ENCODE measurements at regions of chr16 and their contacts with region 1.

Region 1: GRCh38 chr16:3099732-3100499 is 822 bp upstream of the ZSCAN10 start:
- DNase-seq: peak; percentile 98
- CTCF ChIP-seq: no peak

Region 2: GRCh38 chr16:3051494-3051893 is 48.4 kb before region 1 on chr16:
- CTCF ChIA-PET with region 1: no interaction called
- POLR2A ChIA-PET with region 1: no interaction called
- DNase-seq: no peak
- CTCF ChIP-seq: no peak

Region 3: DNA sequence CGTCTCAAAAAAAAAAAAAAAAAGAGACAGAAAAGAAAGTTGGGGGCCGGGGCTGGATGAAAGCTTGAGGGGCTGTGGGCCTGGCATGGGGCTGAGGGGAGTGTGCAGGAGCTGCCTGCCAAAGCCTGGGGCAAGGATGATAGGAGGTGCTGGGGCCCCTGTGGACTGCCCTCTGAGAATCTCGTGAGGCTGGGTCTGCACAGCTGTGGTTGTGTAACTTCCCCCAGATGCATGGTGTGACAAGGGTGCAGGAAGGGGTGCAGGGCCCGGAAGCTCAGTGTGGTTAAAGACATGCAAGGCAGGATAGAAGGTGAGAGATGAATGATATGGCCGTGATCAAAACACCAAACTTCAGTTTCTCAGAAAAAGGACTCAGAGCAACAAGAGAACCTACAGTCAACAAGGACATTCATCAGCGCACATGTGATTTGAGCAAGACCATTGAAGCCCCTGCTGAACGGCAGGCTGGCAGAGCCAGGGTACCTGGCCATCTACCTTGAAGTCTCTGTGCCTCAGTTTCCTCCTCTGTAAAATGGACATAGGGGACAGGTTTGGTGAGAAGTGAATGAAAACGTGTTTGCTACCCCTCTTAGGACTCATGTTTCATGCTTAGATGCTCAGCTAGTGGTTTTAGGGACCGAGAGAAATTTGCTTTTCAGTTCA is 24.9 kb before region 1 on chr16:
- CTCF ChIA-PET with region 1: interaction called, 34 read pairs
- POLR2A ChIA-PET with region 1: interaction called, 4 read pairs
- DNase-seq: peak; percentile 65
- CTCF ChIP-seq: no peak

Region 4: DNA sequence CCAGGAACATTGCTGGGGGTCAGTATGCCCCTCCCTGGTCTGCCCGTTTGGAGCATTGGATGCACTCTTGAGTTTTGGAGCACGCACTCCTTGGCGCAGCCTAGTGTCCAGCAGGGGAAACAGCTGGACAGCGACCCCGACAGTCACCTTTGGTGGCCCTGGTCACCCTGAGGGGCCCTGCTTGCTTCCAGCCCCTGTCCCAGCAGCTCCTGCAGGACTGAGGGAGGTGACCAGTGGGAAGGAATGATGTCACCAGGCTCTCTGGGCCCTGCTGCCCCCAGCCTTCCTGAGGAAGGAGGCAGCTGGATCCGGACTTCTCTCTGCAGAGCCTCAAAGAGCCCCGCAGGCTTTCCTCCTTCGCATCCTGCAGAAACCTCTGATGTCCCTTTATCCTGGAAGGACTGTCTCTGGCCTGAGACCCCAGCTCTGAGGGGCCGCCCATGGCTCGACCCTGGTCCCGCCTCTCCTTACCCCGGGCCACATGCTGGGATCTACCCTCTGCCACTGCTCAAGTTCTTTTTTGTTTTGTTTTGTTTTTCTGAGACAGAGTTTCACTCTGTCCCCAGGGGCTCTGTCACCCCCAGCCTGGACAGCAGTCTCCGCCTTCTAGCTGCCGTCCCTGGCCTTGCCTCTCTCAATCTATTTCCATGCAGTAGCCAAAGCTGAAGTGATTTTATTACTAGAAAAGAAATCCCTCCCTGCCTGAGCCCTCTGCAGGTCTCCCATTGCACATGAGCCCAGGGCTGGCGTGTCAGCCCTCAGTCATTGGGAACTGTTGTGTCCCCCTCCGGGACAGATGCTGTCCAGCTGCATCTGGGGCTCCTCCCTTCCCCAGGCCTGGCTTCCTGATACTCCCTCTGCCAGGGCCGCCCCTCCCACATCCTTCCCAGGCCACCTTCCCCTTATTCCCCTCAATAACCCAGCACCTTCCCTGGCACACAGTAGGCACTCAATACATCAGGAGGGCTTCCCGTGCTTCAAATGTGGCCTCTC is 12.4 kb before region 1 on chr16:
- CTCF ChIA-PET with region 1: interaction called, 31 read pairs
- POLR2A ChIA-PET with region 1: no interaction called
- DNase-seq: peak; percentile 28
- CTCF ChIP-seq: peak; percentile 46

Region 5: DNA sequence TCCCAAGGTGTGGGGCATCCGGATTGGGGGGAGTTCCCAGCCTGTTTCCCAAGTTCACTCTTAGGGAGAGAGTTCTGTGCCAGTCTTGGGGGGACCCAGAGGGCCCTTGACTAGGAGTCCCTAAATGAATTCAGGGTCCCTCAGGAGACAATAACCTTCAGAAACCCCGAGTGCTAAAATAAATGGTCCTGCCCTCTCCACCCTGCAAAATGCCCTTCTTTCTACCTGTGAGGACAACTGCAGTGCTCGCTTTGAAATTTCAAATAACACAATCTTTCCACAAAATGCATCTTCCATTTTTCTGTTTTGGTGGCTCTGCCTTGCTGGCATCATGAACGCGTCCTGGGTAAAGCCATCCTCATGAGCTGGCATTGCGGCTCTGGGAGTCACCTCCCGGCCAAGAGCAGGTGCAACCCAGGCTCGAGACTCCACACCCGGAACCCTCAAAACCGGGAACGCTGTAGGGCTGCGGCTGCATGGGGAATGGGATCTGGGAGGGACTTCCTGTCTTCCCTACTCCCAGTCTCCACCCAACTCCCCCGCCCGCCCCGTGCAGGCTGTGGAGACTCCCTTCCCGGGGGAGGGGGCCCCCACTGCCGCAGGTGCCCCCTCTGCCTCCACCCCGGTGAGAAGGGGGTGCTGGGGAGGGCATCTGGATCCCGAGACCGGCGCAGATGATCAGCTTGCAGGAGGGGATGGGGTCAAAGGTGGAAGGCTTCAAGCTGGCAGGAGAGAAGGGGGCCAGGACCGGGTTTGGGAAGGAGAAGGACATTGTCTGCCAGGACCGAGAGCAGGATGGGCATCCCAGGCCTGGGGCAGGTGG is 12.4 kb after region 1 on chr16 and contains the start of gene ZNF205:
- CTCF ChIA-PET with region 1: interaction called, 10 read pairs
- POLR2A ChIA-PET with region 1: no interaction called
- DNase-seq: no peak
- CTCF ChIP-seq: no peak

Region 6: GRCh38 chr16:3223913-3224515 is 124.1 kb after region 1 on chr16:
- CTCF ChIA-PET with region 1: no interaction called
- POLR2A ChIA-PET with region 1: no interaction called
- DNase-seq: no peak
- CTCF ChIP-seq: no peak

Region 7: GRCh38 chr16:4123616-4124265 is 1023.8 kb after region 1 on chr16:
- CTCF ChIA-PET with region 1: no interaction called
- POLR2A ChIA-PET with region 1: no interaction called
- DNase-seq: no peak
- CTCF ChIP-seq: no peak

Measured in GM10248 (cell line).